ENCODE measurements at regions of chr5 and their contacts with region 1.

Region 1: GRCh38 chr5:144191998-144192397 is 21.3 kb downstream of the KCTD16 start:
- DNase-seq: peak in 7 of 9 donors; percentile 72 to 88 (median 85)
- ATAC-seq: peak; percentile 73
- H3K4me3 ChIP-seq: peak overlapping the region; percentile 2
- H3K4me3 Mint-ChIP-seq: no peak overlapping the region
- H3K27ac ChIP-seq: peak overlapping the region; percentile 67
- H3K27ac Mint-ChIP-seq: no peak overlapping the region
- H3K4me1 ChIP-seq: peaks cover 50 to 51% of the 10 kb centered on the region in 2 donors
- H3K4me1 Mint-ChIP-seq: peaks cover 22 to 45% (median 23%) of the 10 kb centered on the region in 7 donors
- H3K27me3 ChIP-seq: no peaks in the 10 kb centered on the region
- H3K27me3 Mint-ChIP-seq: peaks cover 0 to 2% (median 0%) of the 10 kb centered on the region in 5 donors

Region 2: GRCh38 chr5:142221091-142221860 is 1970.7 kb before region 1 on chr5:
- CTCF ChIA-PET with region 1: no interaction called
- POLR2A ChIA-PET with region 1: no interaction called
- intact Hi-C with region 1: loop called in 1 of 2 experiments (anchors 10 kb)
- DNase-seq: no peak
- ATAC-seq: no peak
- H3K4me3 ChIP-seq: no peak overlapping the region
- H3K4me3 Mint-ChIP-seq: peak overlapping the region in 3 of 10 donors; percentile 17 to 31 (median 19)
- H3K27ac ChIP-seq: no peak overlapping the region
- H3K27ac Mint-ChIP-seq: peak overlapping the region in 3 of 9 donors; percentile 3 to 52 (median 6)
- H3K4me1 ChIP-seq: peaks cover 6 to 25% of the 10 kb centered on the region in 2 donors
- H3K4me1 Mint-ChIP-seq: peaks cover 18 to 39% (median 34%) of the 10 kb centered on the region in 7 donors
- H3K27me3 ChIP-seq: no peaks in the 10 kb centered on the region
- H3K27me3 Mint-ChIP-seq: peaks cover 0 to 10% (median 0%) of the 10 kb centered on the region in 5 donors

Region 3: DNA sequence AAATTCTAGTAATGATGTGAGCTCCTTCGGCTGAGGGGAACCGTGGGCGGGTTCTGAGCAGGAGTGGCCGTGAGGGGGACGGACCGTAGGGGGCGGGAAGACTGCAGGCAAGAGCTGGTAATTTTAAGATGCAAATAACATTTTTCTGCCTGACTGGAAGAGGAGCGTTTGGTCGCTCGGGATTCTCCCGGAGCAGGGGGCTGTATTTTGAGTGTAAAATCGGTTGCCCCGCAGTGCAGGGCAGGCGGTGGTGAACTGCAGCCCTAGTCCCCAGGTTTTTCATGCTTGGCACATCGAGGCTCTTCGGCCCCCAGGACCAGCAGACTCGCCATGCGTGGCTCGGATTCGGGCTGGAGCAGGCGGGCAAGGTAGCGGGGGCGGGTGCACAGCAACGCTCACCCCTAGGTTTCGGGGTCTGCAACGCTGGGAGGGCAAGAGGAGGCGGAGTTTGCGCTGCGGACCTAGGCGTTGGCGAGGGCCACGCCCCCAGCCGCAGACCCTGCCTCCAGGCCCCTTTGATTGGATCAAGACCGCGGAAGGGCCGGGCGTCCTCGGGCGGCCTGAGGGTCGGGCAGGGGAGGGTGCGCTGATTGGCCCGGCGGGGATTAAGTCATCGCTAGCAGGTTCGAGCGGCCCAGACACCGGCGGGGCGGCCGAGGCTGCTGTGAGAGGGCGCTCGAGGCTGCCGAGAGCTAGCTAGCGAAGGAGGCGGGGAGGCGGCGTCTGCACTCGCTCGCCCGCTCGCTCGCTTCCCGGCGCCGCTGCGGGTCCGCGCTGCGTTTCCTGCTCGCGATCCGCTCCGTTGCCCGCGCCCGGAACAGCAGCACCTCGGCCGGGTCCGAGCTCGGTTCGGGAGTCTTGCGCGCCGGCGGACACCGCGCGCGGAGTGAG is 1422.0 kb before region 1 on chr5 and contains the start of gene ARHGAP26:
- CTCF ChIA-PET with region 1: no interaction called
- POLR2A ChIA-PET with region 1: no interaction called
- intact Hi-C with region 1: loop called (anchors 1 kb)
- DNase-seq: peak; percentile 82 to 93 (median 87)
- ATAC-seq: peak; percentile 94
- H3K4me3 ChIP-seq: peak within 1 kb of the TSS; percentile 86
- H3K4me3 Mint-ChIP-seq: peak within 1 kb of the TSS; percentile 87 to 100 (median 96)
- H3K27ac ChIP-seq: peak within 1 kb of the TSS; percentile 77
- H3K27ac Mint-ChIP-seq: peak within 1 kb of the TSS; percentile 89 to 98 (median 92)
- H3K4me1 ChIP-seq: peaks cover 9 to 15% of the 10 kb centered on the region in 2 donors
- H3K4me1 Mint-ChIP-seq: peaks cover 30 to 39% (median 35%) of the 10 kb centered on the region in 7 donors
- H3K27me3 ChIP-seq: no peaks in the 10 kb centered on the region
- H3K27me3 Mint-ChIP-seq: peaks cover 0 to 3% (median 0%) of the 10 kb centered on the region in 5 donors
- total RNA-seq, gene ARHGAP26: 20.1 to 123 (median 29.1) TPM

Region 4: GRCh38 chr5:143222287-143223231 is 969.4 kb before region 1 on chr5:
- CTCF ChIA-PET with region 1: no interaction called
- POLR2A ChIA-PET with region 1: no interaction called
- intact Hi-C with region 1: loop called in 1 of 2 experiments (anchors 5 kb)
- DNase-seq: peak; percentile 13 to 55 (median 27)
- ATAC-seq: peak; percentile 81
- H3K4me3 ChIP-seq: peak overlapping the region; percentile 7
- H3K4me3 Mint-ChIP-seq: peak overlapping the region; percentile 9 to 80 (median 54)
- H3K27ac ChIP-seq: peak overlapping the region; percentile 40
- H3K27ac Mint-ChIP-seq: peak overlapping the region; percentile 60 to 94 (median 88)
- H3K4me1 ChIP-seq: peaks cover 0 to 30% of the 10 kb centered on the region in 2 donors
- H3K4me1 Mint-ChIP-seq: peaks cover 33 to 76% (median 40%) of the 10 kb centered on the region in 7 donors
- H3K27me3 ChIP-seq: no peaks in the 10 kb centered on the region
- H3K27me3 Mint-ChIP-seq: no peaks in the 10 kb centered on the region

Region 5: GRCh38 chr5:143435210-143435657 is 756.8 kb before region 1 on chr5:
- CTCF ChIA-PET with region 1: no interaction called
- POLR2A ChIA-PET with region 1: interaction called, 16 read pairs
- intact Hi-C with region 1: loop called in 1 of 2 experiments (anchors 1 kb)
- DNase-seq: peak in 8 of 9 donors; percentile 25 to 63 (median 56)
- ATAC-seq: peak; percentile 79
- H3K4me3 ChIP-seq: peak overlapping the region; percentile 70
- H3K4me3 Mint-ChIP-seq: peak overlapping the region; percentile 93 to 99 (median 96)
- H3K27ac ChIP-seq: peak overlapping the region; percentile 81
- H3K27ac Mint-ChIP-seq: peak overlapping the region; percentile 91 to 100 (median 98)
- H3K4me1 ChIP-seq: peaks cover 20 to 27% of the 10 kb centered on the region in 2 donors
- H3K4me1 Mint-ChIP-seq: peaks cover 35 to 70% (median 66%) of the 10 kb centered on the region in 7 donors
- H3K27me3 ChIP-seq: no peaks in the 10 kb centered on the region
- H3K27me3 Mint-ChIP-seq: no peaks in the 10 kb centered on the region

Region 6: GRCh38 chr5:143896966-143897365 is 295.0 kb before region 1 on chr5:
- CTCF ChIA-PET with region 1: no interaction called
- POLR2A ChIA-PET with region 1: no interaction called
- intact Hi-C with region 1: loop called (anchors 5 kb)
- DNase-seq: no peak
- ATAC-seq: no peak
- H3K4me3 ChIP-seq: no peak overlapping the region
- H3K4me3 Mint-ChIP-seq: peak overlapping the region in 1 of 10 donors; percentile 11
- H3K27ac ChIP-seq: no peak overlapping the region
- H3K27ac Mint-ChIP-seq: peak overlapping the region in 2 of 9 donors; percentile 38 to 52
- H3K4me1 ChIP-seq: peaks cover 0 to 18% of the 10 kb centered on the region in 2 donors
- H3K4me1 Mint-ChIP-seq: peaks cover 6 to 43% (median 37%) of the 10 kb centered on the region in 7 donors
- H3K27me3 ChIP-seq: no peaks in the 10 kb centered on the region
- H3K27me3 Mint-ChIP-seq: peaks cover 0 to 3% (median 0%) of the 10 kb centered on the region in 5 donors

Region 7: GRCh38 chr5:144170276-144171024 is 21.5 kb before region 1 on chr5 and contains the starts of genes KCTD16 and YIPF5:
- CTCF ChIA-PET with region 1: interaction called, 25 read pairs
- POLR2A ChIA-PET with region 1: interaction called, 135 read pairs
- intact Hi-C with region 1: loop called (anchors 1 kb)
- DNase-seq: peak; percentile 90 to 98 (median 98)
- ATAC-seq: peak; percentile 98
- H3K4me3 ChIP-seq: peak within 1 kb of the TSS; percentile 79
- H3K4me3 Mint-ChIP-seq: peak within 1 kb of the TSS; percentile 90 to 99 (median 94)
- H3K27ac ChIP-seq: peak within 1 kb of the TSS; percentile 91
- H3K27ac Mint-ChIP-seq: peak within 1 kb of the TSS; percentile 85 to 96 (median 95)
- H3K4me1 ChIP-seq: peaks cover 15 to 19% of the 10 kb centered on the region in 2 donors
- H3K4me1 Mint-ChIP-seq: peaks cover 19 to 56% (median 52%) of the 10 kb centered on the region in 7 donors
- H3K27me3 ChIP-seq: no peaks in the 10 kb centered on the region
- H3K27me3 Mint-ChIP-seq: peaks cover 0 to 29% (median 0%) of the 10 kb centered on the region in 5 donors
- total RNA-seq, gene KCTD16: 0.07 to 0.22 TPM in 2 of 5 experiments, not detected in the others
- total RNA-seq, gene YIPF5: 27.0 to 49.2 (median 38.6) TPM

Region 8: GRCh38 chr5:144237851-144238250 is 45.9 kb after region 1 on chr5:
- CTCF ChIA-PET with region 1: no interaction called
- POLR2A ChIA-PET with region 1: no interaction called
- intact Hi-C with region 1: no loop called
- DNase-seq: no peak
- ATAC-seq: no peak
- H3K4me3 ChIP-seq: no peak overlapping the region
- H3K4me3 Mint-ChIP-seq: no peak overlapping the region
- H3K27ac ChIP-seq: no peak overlapping the region
- H3K27ac Mint-ChIP-seq: no peak overlapping the region
- H3K4me1 ChIP-seq: no peaks in the 10 kb centered on the region
- H3K4me1 Mint-ChIP-seq: no peaks in the 10 kb centered on the region
- H3K27me3 ChIP-seq: no peaks in the 10 kb centered on the region
- H3K27me3 Mint-ChIP-seq: peaks cover 2 to 45% (median 28%) of the 10 kb centered on the region in 5 donors